ENCODE measurements at regions of chr17 and their contacts with region 1.

Region 1: GRCh38 chr17:67376737-67377487 is at the start of gene PITPNC1:
- DNase-seq: peak; percentile 61
- H3K4me3 ChIP-seq: peak within 1 kb of the TSS; percentile 79
- H3K27ac ChIP-seq: peak within 1 kb of the TSS; percentile 83
- H3K27me3 ChIP-seq: no peaks in the 10 kb centered on the region
- CTCF ChIP-seq: no peak
- polyA plus RNA-seq, gene PITPNC1: 7.5 and 9.1 TPM in 2 replicates

Region 2: DNA sequence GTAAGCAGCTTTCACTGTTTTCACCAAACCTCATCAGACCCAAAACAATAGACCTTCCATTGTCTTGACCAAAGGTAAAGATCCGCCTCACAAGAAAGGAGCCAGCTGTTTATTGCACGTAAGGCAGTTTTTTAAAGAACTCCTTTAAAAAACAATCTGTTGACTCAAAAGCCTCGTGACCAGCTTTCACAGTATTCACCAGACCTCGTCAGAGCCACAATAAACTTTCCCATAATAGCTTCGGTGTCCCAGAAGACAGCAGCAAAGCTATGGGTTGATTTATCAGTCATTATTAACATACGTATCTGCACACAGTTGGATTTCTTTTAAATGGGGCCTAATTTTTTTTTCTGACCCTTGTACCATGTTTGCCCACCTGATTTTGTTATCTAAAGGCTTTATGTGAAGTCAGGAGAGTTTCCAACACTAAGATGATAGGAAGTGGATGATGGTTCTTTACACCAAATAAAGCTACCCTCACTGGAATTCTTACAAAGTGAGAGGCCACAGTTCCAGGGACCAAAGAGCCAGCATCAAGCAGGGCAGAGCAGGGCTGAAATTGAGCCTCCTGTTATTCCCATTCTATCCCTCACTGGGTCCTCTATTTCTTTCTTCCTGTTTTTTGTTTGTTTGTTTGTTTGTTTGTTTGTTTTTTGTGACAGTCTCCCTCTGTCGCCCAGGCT is 114.3 kb before region 1 on chr17:
- CTCF ChIA-PET with region 1: no interaction called
- POLR2A ChIA-PET with region 1: no interaction called
- DNase-seq: no peak
- H3K4me3 ChIP-seq: no peak overlapping the region
- H3K27ac ChIP-seq: no peak overlapping the region
- H3K27me3 ChIP-seq: no peaks in the 10 kb centered on the region
- CTCF ChIP-seq: no peak

Region 3: GRCh38 chr17:67366193-67367157 is 10.4 kb before region 1 on chr17 and contains the start of gene PSMD12:
- CTCF ChIA-PET with region 1: interaction called, 15 read pairs
- POLR2A ChIA-PET with region 1: interaction called, 3 read pairs
- DNase-seq: peak; percentile 67
- H3K4me3 ChIP-seq: peak within 1 kb of the TSS; percentile 98
- H3K27ac ChIP-seq: peak within 1 kb of the TSS; percentile 90
- H3K27me3 ChIP-seq: no peaks in the 10 kb centered on the region
- CTCF ChIP-seq: no peak
- polyA plus RNA-seq, gene PSMD12: 31.5 and 42.1 TPM in 2 replicates

Region 4: DNA sequence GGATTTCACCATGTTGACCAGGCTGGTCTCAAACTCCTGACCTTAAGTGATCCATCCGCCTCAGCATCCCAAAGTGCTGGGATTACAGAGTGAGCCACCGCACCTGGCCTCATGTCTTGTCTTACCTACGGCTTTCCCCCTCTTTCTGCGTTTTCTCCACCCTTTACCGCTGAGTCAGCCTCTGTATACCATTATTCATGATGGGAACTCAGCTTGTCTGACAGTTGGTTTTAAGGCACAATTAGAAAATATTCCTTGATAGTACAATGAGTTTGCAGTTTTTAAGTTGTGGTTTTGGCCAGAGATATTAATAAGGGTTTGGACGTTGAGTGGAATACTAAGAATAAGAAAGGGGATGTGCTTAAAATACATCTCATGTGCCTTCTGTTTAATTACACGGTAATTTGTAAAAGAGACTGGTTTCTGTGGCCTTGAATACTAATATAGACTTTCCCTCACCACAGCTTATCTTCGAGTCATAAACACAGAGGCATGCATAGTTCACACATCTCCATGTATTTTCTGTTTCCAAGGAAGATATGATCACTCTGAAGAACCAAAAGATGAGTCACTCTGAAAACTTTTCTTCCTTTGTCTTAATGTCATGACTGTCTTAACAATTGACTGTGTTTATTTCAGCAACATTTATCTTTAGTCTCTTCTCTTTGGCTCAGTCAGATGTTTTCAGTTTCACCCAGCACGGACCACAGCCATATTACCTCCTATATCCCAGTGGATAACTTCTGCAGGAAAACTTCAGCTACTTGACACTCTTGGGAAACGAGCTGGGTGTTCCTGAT is 54.5 kb after region 1 on chr17:
- CTCF ChIA-PET with region 1: interaction called, 10 read pairs
- POLR2A ChIA-PET with region 1: no interaction called
- DNase-seq: no peak
- H3K4me3 ChIP-seq: no peak overlapping the region; the same call in 1 of the 2 replicates
- H3K27ac ChIP-seq: peak overlapping the region; percentile 43
- H3K27me3 ChIP-seq: no peaks in the 10 kb centered on the region
- CTCF ChIP-seq: no peak

Region 5: DNA sequence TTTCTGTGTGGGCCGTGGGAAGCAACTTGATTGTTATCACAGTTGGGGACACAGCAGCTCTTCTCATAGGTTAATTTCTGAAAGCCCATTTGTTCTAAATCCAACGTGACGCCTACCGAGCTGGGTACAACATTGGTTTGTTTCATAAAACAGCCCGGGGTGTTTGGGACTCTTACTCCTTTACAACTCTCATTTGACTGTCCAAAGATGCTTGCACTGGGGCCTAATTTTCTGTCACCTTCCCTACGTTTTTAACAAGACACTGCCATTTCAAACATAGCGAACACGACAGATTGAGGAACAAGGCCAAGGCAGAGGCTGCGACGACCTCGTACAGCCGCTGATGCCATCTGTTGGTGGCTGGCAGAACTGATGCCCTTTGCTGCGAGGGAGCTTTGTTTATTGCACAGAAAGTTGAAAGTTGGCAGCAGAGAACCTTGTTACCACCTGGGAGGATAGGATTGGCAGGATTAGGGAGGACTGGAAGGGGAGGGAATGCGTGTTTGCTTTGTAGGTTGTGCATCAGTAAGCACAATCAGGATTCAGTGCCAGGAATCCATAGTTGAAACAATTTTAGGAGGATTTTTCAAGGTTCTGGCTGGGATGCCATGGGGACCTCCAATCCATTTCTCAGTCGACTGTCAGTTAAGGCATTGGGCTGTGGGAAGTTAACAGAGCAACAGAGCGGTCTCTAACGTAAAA is 98.5 kb after region 1 on chr17:
- CTCF ChIA-PET with region 1: interaction called, 34 read pairs
- POLR2A ChIA-PET with region 1: interaction called, 5 read pairs
- DNase-seq: no peak
- H3K4me3 ChIP-seq: no peak overlapping the region
- H3K27ac ChIP-seq: no peak overlapping the region
- H3K27me3 ChIP-seq: no peaks in the 10 kb centered on the region
- CTCF ChIP-seq: peak; percentile 88

Region 6: GRCh38 chr17:67680445-67681224 is 303.7 kb after region 1 on chr17:
- CTCF ChIA-PET with region 1: interaction called, 61 read pairs
- POLR2A ChIA-PET with region 1: interaction called, 8 read pairs
- DNase-seq: no peak
- H3K4me3 ChIP-seq: no peak overlapping the region
- H3K27ac ChIP-seq: no peak overlapping the region
- H3K27me3 ChIP-seq: no peaks in the 10 kb centered on the region
- CTCF ChIP-seq: no peak

Region 7: GRCh38 chr17:67717624-67718329 is 340.9 kb after region 1 on chr17 and contains the start of gene NOL11:
- CTCF ChIA-PET with region 1: interaction called, 12 read pairs
- POLR2A ChIA-PET with region 1: no interaction called
- DNase-seq: peak; percentile 98
- H3K4me3 ChIP-seq: peak within 1 kb of the TSS; percentile 97
- H3K27ac ChIP-seq: peak within 1 kb of the TSS; percentile 90
- H3K27me3 ChIP-seq: no peaks in the 10 kb centered on the region
- CTCF ChIP-seq: peak; percentile 94
- polyA plus RNA-seq, gene NOL11: 35.5 and 47.4 TPM in 2 replicates

Measured in AG04450 (cell line).